ENCODE measurements at regions of chr2 and their contacts with region 1.

Region 1: DNA sequence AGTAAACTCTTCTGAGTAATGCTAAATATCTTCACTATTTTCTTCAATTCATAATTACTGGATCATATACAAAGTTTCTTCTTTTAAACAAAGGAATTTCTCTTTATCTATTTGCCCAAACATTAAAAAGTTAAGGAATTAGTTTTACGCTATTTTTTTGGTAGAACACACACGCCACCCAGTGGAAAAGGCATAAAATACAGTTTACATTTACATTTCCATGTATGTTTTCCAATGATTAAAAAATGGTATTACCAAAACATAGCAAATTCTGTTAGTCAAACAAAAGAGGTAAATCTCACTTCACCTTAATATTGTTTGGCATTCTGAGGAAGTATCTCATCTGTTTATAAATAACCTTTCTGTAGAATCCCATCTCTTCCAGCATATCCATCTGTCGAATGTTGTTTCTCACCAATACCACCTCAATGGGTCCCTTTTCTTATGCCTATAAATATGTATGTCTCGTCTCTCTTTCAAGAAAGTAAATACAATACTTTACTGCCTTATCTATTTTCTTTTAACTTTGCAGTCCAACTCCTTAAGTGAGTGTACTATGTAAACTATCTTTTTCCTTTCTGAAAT is 7.2 kb downstream of the BOLL start:
- DNase-seq: peak in 2 of 4 donors; percentile 19 to 42
- ATAC-seq: peak; percentile 41
- H3K4me3 ChIP-seq: no peak overlapping the region
- H3K27ac ChIP-seq: no peak overlapping the region
- H3K4me1 ChIP-seq: no peaks in the 10 kb centered on the region
- H3K27me3 ChIP-seq: no peaks in the 10 kb centered on the region
- CTCF ChIP-seq: peak; percentile 64 to 68

Region 2: DNA sequence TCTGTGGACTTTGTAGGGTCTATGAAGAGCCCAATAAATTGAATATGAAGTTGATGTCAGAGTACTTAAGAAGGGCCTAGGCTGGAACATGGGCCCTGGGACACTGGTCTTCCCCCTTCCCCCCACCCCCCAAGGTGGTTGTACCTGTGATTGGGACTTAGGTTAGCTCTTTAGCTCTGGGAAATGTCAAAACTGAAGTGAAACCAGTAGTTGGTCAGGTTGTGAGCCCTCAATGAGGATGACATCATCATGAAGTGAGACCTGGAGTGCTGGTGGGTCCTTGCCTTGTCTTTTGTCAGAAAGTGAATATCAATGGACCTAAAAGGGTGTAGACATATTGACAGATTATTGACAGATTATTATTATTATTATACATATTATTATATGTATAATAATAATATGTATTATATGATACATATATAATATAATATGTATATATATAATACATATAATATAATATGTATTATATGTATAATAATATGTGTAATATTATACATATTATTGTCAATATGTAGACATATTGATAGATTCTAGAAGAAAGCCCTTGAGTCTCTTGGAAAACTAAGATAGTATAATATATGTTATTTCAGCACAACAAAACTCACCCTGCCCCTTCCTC is 67.4 kb before region 1 on chr2:
- intact Hi-C with region 1: loop called in 1 of 2 experiments (anchors 10 kb)
- DNase-seq: no peak
- ATAC-seq: no peak
- H3K4me3 ChIP-seq: no peak overlapping the region
- H3K27ac ChIP-seq: no peak overlapping the region
- H3K4me1 ChIP-seq: peaks cover 25 to 35% of the 10 kb centered on the region in 2 donors
- H3K27me3 ChIP-seq: no peaks in the 10 kb centered on the region
- CTCF ChIP-seq: no peak

Region 3: GRCh38 chr2:198214114-198214596 is 436.2 kb after region 1 on chr2:
- intact Hi-C with region 1: no loop called
- DNase-seq: no peak
- ATAC-seq: no peak
- H3K4me3 ChIP-seq: no peak overlapping the region
- H3K27ac ChIP-seq: no peak overlapping the region
- H3K4me1 ChIP-seq: no peaks in the 10 kb centered on the region
- H3K27me3 ChIP-seq: no peaks in the 10 kb centered on the region
- CTCF ChIP-seq: no peak

Measured in left lung (tissue), 14 donors.